Activated T-helper 1 cell treated with anti-CD3 and anti-CD28 coated beads, Interleukin-12 subunit alpha, Interleukin-12 subunit beta, Interleukin-2, Interleukin-4 antibody, amounts not matched to agents 30 ng/mL and 10 ng/mL and 1 ng/mL, durations not matched to agents 14 hours and 24 hours and 36 hours (primary cell): ENCODE measurements at regions of chr12 and their contacts with region 1.

Region 1: DNA sequence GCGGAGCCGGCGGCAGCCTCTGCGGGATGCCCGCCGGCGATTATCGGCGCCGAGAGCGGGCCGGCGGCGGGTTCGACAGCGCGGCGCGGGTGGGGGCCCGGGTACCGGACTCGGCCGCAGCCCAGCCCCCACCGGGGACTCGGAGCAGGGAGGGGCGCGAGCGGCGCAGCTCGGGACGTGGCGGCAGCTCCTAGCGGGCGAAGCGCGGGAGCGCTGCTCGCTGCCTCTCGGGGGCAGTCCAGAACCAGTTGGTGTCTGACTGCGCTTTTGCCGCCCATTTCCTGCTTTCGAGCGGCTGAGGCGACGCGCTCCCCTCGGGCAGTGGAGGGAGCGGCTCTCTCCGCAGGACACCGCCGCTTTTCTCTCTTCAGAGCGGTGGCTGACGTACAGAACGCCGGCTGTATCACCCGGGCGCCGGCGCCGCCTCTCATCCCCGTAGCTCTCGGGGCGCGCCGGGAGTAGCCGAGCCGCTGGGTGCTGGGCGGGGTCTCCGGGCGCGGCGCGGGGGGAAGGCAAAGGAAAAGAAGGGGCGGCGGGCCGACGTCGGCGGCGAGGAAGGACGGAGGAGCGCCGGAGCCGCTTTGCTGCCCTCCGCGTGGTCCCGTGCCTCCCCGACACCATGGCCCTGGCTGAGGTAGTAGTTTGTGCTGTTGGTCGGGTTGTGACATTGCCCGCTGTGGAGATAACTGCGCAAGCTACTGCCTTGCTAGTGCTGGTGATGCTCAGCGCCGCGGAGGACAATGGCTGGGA is 136.6 kb downstream of the MON2 start:
- DNase-seq: peak; percentile 75
- H3K4me3 Mint-ChIP-seq: peak overlapping the region; percentile 90
- H3K27ac Mint-ChIP-seq: peak overlapping the region; percentile 99
- H3K4me1 Mint-ChIP-seq: peaks cover 45% of the 10 kb centered on the region
- H3K27me3 Mint-ChIP-seq: peaks cover 4% of the 10 kb centered on the region

Region 2: DNA sequence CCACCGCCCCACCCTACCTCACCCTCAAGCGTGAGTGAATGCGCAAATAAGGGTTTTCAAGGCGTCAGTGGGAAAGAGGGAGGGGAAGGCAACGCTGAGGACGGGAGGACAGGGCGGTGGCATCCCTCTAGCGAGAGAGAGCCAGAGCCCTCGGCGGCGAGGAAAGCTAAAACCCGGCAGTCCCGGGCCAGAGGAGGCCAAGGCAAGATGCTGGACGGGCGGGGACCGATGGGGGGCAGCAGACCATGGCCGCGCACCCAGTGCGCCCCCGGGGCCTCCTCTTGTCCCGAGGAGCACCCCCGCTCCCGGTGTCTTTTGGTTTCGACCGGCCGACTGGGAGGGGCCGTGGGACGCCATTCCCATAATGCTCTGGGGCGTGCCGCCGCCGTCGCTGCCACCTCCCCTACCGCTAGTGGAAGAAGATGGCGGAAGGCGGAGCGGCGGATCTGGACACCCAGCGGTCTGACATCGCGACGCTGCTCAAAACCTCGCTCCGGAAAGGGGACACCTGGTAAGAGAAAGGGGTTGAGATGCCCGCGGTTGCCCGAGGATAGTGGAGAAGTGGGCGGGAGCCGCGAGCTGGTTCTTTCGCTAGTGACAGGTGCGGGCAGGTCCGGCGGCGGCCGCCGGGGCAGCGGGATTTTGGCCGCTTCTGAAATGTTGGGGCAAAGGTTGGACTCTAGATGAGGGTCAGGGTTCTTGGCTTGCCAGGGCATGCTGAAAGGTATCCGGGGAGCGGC is 343.1 kb before region 1 on chr12 and contains the start of gene USP15:
- intact Hi-C with region 1: loop called (anchors 1 kb)
- DNase-seq: peak; percentile 96
- H3K4me3 Mint-ChIP-seq: peak within 1 kb of the TSS; percentile 97
- H3K27ac Mint-ChIP-seq: peak within 1 kb of the TSS; percentile 99
- H3K4me1 Mint-ChIP-seq: peaks cover 65% of the 10 kb centered on the region
- H3K27me3 Mint-ChIP-seq: no peaks in the 10 kb centered on the region
- total RNA-seq, gene USP15: 100 and 110 TPM in 2 replicates

Region 3: GRCh38 chr12:62347922-62348650 is 255.2 kb before region 1 on chr12:
- intact Hi-C with region 1: no loop called
- DNase-seq: no peak
- H3K4me3 Mint-ChIP-seq: no peak overlapping the region
- H3K27ac Mint-ChIP-seq: no peak overlapping the region
- H3K4me1 Mint-ChIP-seq: peaks cover 7% of the 10 kb centered on the region
- H3K27me3 Mint-ChIP-seq: no peaks in the 10 kb centered on the region

Region 4: GRCh38 chr12:62581288-62582064 is 21.8 kb before region 1 on chr12:
- intact Hi-C with region 1: loop called (anchors 2 kb)
- DNase-seq: no peak
- H3K4me3 Mint-ChIP-seq: no peak overlapping the region
- H3K27ac Mint-ChIP-seq: no peak overlapping the region
- H3K4me1 Mint-ChIP-seq: no peaks in the 10 kb centered on the region
- H3K27me3 Mint-ChIP-seq: no peaks in the 10 kb centered on the region

Region 5: GRCh38 chr12:62640910-62641448 is 37.7 kb after region 1 on chr12:
- intact Hi-C with region 1: loop called (anchors 1 kb)
- DNase-seq: no peak
- H3K4me3 Mint-ChIP-seq: no peak overlapping the region
- H3K27ac Mint-ChIP-seq: peak overlapping the region; percentile 54
- H3K4me1 Mint-ChIP-seq: peaks cover 17% of the 10 kb centered on the region
- H3K27me3 Mint-ChIP-seq: peaks cover 18% of the 10 kb centered on the region

Region 6: GRCh38 chr12:62793256-62794217 is 190.3 kb after region 1 on chr12:
- intact Hi-C with region 1: loop called (anchors 1 kb)
- DNase-seq: peak; percentile 40
- H3K4me3 Mint-ChIP-seq: no peak overlapping the region
- H3K27ac Mint-ChIP-seq: no peak overlapping the region
- H3K4me1 Mint-ChIP-seq: no peaks in the 10 kb centered on the region
- H3K27me3 Mint-ChIP-seq: peaks cover 12% of the 10 kb centered on the region

Region 7: GRCh38 chr12:63779498-63780481 is 1176.6 kb after region 1 on chr12 and contains the start of gene RXYLT1:
- intact Hi-C with region 1: loop called (anchors 10 kb)
- DNase-seq: peak; percentile 75
- H3K4me3 Mint-ChIP-seq: peak within 1 kb of the TSS; percentile 95
- H3K27ac Mint-ChIP-seq: peak within 1 kb of the TSS; percentile 90
- H3K4me1 Mint-ChIP-seq: peaks cover 18% of the 10 kb centered on the region
- H3K27me3 Mint-ChIP-seq: no peaks in the 10 kb centered on the region
- total RNA-seq, gene RXYLT1: 26.5 and 27.3 TPM in 2 replicates

Region 8: GRCh38 chr12:64451687-64452558 is 1848.7 kb after region 1 on chr12 and contains the start of gene TBK1:
- intact Hi-C with region 1: loop called (anchors 5 kb)
- DNase-seq: peak; percentile 74
- H3K4me3 Mint-ChIP-seq: peak within 1 kb of the TSS; percentile 97
- H3K27ac Mint-ChIP-seq: peak within 1 kb of the TSS; percentile 94
- H3K4me1 Mint-ChIP-seq: peaks cover 47% of the 10 kb centered on the region
- H3K27me3 Mint-ChIP-seq: no peaks in the 10 kb centered on the region
- total RNA-seq, gene TBK1: 33.6 and 42.4 TPM in 2 replicates